ENCODE measurements at regions of chr7 and their contacts with region 1.

Region 1: DNA sequence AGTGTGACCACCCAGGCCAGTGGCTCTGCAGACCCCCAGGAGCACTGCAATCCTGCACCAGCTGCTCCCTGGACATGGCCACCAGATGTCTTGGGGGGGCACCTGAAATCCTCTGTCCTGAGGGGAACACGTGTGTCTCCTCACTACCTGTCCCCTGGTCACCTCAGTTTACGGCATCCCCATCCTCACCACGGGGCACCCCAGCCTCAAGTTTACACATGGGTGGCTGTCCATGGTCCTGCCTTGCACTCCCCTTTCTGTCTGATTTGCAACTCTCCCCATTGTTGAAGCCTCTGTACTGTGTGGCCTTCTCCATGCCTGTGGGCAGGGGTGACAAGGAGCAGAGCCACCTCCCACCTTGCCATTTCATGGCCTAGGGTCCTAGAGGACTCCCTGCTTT is 67.2 kb downstream of the RAMP3 start:
- DNase-seq: peak; percentile 28
- ATAC-seq: no peak
- H3K4me3 Mint-ChIP-seq: no peak overlapping the region
- H3K27ac Mint-ChIP-seq: no peak overlapping the region
- H3K4me1 Mint-ChIP-seq: no peaks in the 10 kb centered on the region
- H3K27me3 Mint-ChIP-seq: peaks cover 27% of the 10 kb centered on the region

Region 2: DNA sequence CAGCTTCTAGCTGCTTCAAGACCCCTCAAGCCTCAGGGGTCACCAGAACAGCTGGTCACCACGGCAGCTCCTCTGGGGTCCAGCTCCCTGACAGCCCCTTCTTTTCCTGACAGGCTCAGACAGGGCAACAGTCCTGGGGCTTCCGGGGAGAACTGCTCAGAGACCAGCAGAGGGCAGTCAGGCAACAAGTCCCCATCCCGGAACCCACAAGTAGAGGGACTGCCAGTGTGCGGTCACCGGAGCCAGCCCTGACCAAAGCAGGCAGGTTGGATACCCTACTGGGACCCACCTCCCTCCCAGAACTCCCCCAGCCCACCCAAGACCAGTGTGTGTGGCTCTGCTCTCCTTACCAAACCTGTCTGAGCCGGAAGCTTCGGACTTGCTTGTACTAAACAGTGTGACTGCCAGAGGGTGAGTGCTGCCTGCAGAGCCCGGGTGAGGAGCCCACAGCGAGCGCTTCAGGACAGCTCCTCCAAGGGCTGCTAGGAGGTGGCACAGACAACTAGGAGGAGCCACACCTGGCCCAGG is 983.8 kb before region 1 on chr7:
- CTCF ChIA-PET with region 1: no interaction called
- POLR2A ChIA-PET with region 1: no interaction called
- intact Hi-C with region 1: no loop called
- DNase-seq: peak; percentile 81
- ATAC-seq: peak; percentile 95
- H3K4me3 Mint-ChIP-seq: no peak overlapping the region
- H3K27ac Mint-ChIP-seq: peak overlapping the region; percentile 51
- H3K4me1 Mint-ChIP-seq: no peaks in the 10 kb centered on the region
- H3K27me3 Mint-ChIP-seq: no peaks in the 10 kb centered on the region

Region 3: GRCh38 chr7:45080265-45080962 is 144.4 kb before region 1 on chr7:
- CTCF ChIA-PET with region 1: no interaction called
- POLR2A ChIA-PET with region 1: no interaction called
- intact Hi-C with region 1: no loop called
- DNase-seq: no peak
- ATAC-seq: peak; percentile 27
- H3K4me3 Mint-ChIP-seq: no peak overlapping the region
- H3K27ac Mint-ChIP-seq: no peak overlapping the region
- H3K4me1 Mint-ChIP-seq: no peaks in the 10 kb centered on the region
- H3K27me3 Mint-ChIP-seq: no peaks in the 10 kb centered on the region

Region 4: DNA sequence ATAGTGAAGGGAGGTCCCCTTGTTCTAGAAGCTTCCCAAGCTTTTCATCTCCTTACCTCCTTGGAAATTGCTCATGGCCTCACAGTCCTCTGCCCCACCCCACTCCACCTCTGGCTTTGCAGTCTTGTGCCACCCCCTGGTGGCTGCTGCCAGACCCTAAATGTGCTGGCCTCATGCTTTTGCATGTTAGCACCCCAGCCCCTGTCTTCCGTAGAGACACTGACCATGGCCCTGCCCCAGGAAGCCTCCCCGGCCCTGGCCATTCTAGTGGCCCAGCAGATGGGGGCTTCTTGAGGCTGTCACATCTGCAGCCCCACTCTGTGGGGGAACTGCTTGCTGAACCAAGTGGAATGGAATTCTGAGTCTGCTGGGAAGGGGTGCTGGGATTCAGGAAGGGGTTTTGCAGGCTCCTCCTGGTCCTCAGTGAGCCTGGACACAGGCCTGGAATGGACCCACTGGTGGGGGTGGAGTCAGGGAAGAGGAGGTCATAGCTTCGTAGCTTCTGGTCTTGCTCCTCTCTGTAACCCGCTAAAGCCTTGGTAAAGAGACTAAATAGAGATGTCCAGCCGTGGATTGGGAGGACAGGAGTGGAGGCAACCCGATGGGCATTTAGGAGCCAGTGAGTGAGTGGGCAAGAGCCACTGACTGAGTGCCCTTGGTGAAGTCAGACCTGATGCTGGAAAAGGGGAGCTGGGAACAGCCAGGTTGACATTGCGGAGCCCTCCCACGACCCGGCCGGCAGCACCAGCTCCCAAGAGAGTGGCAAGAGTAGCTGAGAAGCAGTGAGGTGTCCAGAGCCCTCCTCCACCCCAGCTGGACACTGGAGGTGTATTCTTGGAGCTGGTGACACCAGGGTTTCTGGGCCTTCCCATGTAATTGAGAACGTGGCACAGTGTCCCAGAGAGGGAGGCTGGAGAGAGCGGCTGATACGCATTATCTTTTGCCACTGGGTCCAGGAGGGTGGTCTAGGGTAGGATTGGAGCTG is 46.3 kb before region 1 on chr7:
- CTCF ChIA-PET with region 1: interaction called, 3 read pairs
- POLR2A ChIA-PET with region 1: no interaction called
- intact Hi-C with region 1: loop called in 1 of 2 experiments (anchors 5 kb)
- DNase-seq: peak; percentile 30
- ATAC-seq: peak; percentile 69
- H3K4me3 Mint-ChIP-seq: no peak overlapping the region
- H3K27ac Mint-ChIP-seq: no peak overlapping the region
- H3K4me1 Mint-ChIP-seq: no peaks in the 10 kb centered on the region
- H3K27me3 Mint-ChIP-seq: peaks cover 6% of the 10 kb centered on the region

Measured in activated CD4-positive, alpha-beta T cell treated with anti-CD3 and anti-CD28 coated beads for 36 hours (primary cell).